Activated CD4-positive, alpha-beta T cell treated with anti-CD3 and anti-CD28 coated beads for 36 hours (primary cell): ENCODE measurements at regions of chr11 and their contacts with region 1.

Region 1: GRCh38 chr11:75204685-75205563 is 35.6 kb upstream of the TPBGL start:
- DNase-seq: peak; percentile 93
- ATAC-seq: peak; percentile 99
- H3K4me3 Mint-ChIP-seq: no peak overlapping the region
- H3K27ac Mint-ChIP-seq: no peak overlapping the region
- H3K4me1 Mint-ChIP-seq: no peaks in the 10 kb centered on the region
- H3K27me3 Mint-ChIP-seq: peaks cover 2% of the 10 kb centered on the region

Region 2: DNA sequence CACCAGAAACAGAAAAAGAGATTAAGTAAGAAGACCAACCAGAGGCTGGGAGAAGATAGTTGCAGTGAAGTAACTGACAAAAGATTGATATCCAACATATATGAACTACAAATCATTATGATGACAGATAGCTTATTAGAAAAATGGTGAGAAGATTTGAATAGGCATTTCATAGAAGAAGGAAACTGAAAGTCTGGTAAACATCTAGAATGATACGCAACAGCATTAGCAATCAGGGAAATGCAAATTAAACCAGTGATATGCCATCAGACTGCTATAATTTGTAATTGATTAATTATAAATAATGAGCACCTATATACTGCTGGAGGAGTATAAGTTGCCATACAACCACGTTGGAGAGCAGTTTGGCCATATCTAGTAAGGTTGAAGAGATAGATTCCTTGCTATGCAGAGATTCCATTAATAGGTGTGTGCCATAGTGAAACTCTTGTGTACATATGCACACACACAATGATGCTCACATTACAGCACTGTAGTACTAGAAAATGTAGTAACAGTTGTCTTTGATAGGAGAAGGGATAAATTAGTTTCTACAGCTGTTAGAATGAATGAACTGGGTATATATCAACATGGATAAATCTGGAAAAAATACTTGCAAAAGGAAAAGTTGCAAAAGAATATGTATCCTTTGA is 435.7 kb before region 1 on chr11:
- CTCF ChIA-PET with region 1: no interaction called
- POLR2A ChIA-PET with region 1: no interaction called
- intact Hi-C with region 1: no loop called
- DNase-seq: no peak
- ATAC-seq: no peak
- H3K4me3 Mint-ChIP-seq: no peak overlapping the region
- H3K27ac Mint-ChIP-seq: no peak overlapping the region
- H3K4me1 Mint-ChIP-seq: peaks cover 30% of the 10 kb centered on the region
- H3K27me3 Mint-ChIP-seq: no peaks in the 10 kb centered on the region

Region 3: GRCh38 chr11:75022759-75023396 is 182.0 kb before region 1 on chr11:
- CTCF ChIA-PET with region 1: interaction called, 36 read pairs
- POLR2A ChIA-PET with region 1: no interaction called
- intact Hi-C with region 1: loop called (anchors 1 kb)
- DNase-seq: peak; percentile 86
- ATAC-seq: peak; percentile 91
- H3K4me3 Mint-ChIP-seq: no peak overlapping the region
- H3K27ac Mint-ChIP-seq: no peak overlapping the region
- H3K4me1 Mint-ChIP-seq: no peaks in the 10 kb centered on the region
- H3K27me3 Mint-ChIP-seq: no peaks in the 10 kb centered on the region

Region 4: DNA sequence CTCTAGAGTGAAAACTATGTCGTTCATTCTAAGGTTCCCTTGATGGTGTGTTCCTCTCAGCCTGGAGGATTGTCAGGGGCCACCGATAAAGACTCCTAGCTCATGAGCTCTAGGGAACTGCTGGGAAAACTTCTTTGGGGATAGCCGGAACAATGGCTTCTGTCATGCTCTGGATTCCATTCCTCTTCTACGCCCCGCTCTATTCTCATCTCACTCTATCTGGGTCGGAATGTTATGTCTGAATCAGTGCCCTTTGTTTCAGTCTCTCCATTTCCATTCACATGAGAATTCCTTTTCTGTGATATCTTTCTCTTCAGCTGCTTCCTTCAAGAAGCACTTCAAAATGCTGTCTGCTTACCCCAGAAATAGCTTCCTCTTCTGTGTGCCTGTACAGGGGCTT is 70.9 kb before region 1 on chr11:
- CTCF ChIA-PET with region 1: interaction called, 222 read pairs
- POLR2A ChIA-PET with region 1: no interaction called
- intact Hi-C with region 1: no loop called
- DNase-seq: no peak
- ATAC-seq: no peak
- H3K4me3 Mint-ChIP-seq: no peak overlapping the region
- H3K27ac Mint-ChIP-seq: no peak overlapping the region
- H3K4me1 Mint-ChIP-seq: no peaks in the 10 kb centered on the region
- H3K27me3 Mint-ChIP-seq: peaks cover 13% of the 10 kb centered on the region

Region 5: GRCh38 chr11:75230621-75231020 is 25.7 kb after region 1 on chr11:
- CTCF ChIA-PET with region 1: no interaction called
- POLR2A ChIA-PET with region 1: no interaction called
- intact Hi-C with region 1: no loop called
- DNase-seq: no peak
- ATAC-seq: no peak
- H3K4me3 Mint-ChIP-seq: no peak overlapping the region
- H3K27ac Mint-ChIP-seq: no peak overlapping the region
- H3K4me1 Mint-ChIP-seq: no peaks in the 10 kb centered on the region
- H3K27me3 Mint-ChIP-seq: peaks cover 6% of the 10 kb centered on the region